ENCODE measurements at regions of chr6 and their contacts with region 1.

Region 1: DNA sequence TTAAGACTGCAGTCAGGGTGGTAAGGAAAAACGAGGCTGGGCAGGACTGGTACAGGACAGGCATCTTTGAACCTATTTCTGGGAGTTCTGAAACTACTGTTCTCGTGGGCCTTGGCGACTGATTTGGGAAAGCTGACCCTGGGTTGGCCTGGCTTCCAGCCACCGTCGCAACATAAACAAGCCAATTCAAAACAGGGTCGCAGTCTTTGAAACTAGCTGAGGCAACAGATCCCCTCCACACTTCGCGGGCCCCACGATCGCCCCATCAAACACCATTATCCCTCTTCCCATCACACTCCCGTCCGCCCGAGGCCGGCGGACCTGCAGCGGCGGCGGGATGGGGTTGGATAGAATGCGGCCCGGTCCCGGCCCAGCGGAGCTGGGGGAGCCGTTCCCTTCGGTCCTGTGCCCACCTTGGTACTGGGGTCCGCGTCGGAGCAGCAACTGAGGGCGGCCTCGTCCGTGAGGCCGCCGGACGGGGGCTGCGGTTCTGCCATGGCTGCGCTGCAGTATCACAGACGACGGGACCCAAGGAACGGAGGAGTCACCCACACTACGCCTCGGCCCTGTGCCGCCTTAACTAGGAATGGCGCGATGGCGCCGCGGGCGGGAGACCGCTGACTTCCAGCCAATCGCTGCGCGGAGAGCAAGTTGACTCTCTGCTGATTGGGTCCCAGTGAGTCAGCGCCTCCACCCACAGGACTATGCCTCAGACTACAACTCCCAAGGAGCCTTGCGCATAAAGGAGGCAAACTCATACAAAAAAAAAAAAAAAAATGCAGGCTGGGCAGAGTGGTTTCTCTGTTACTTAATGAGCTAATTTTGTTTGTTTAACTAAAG is at the start of gene GLO1:
- DNase-seq: peak; percentile 97
- ATAC-seq: peak; percentile 99
- H3K4me3 ChIP-seq: peak within 1 kb of the TSS; percentile 81 to 86
- H3K27ac ChIP-seq: peak within 1 kb of the TSS; percentile 70
- H3K4me1 ChIP-seq: peaks cover 0 to 11% of the 10 kb centered on the region in 2 experiments; a peak in 2 of 4 replicates
- H3K27me3 ChIP-seq: no peaks in the 10 kb centered on the region
- CTCF ChIP-seq: no peak
- POLR2A ChIP-seq: peak; percentile 91
- RAD21 ChIP-seq: no peak
- total RNA-seq, gene GLO1: 191 TPM

Region 2: DNA sequence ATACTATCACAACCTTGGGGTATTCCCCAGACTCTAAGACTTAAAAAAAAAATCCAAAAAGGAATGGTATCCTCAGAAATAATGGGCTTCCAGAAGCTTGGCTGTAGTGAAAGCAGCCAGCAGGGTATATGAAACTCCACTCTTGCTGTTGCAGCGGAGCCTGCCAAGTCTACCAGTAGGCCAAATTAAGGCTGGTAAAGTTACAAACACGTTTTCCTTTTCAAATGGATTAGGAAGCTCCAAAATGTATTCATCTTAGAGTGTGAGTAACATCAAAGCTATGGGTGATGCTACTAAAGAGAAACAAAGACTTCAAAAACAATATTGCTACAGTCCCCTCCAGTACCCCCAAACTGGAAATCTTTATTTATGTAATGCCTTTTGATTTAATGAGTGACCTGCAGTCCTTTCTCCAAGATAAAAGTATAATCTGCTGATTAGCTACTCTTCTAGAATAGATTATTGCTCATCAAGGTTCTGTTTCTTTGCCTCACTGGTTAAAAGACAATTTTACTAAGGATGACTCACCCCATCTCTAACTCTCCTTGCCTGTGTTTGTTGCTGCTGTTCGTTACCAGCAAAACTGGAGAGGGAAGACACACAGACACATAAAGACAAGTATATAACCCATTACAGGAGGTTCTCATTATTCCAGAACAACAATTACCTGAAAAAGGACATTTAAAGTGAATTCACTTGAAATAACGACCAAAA is 147.9 kb before region 1 on chr6:
- CTCF ChIA-PET with region 1: no interaction called
- POLR2A ChIA-PET with region 1: no interaction called
- RAD21 ChIA-PET with region 1: no interaction called
- intact Hi-C with region 1: no loop called
- DNase-seq: no peak
- ATAC-seq: no peak; the same call in 1 of the 2 replicates
- H3K4me3 ChIP-seq: no peak overlapping the region
- H3K27ac ChIP-seq: no peak overlapping the region
- H3K4me1 ChIP-seq: peaks cover 0 to 9% of the 10 kb centered on the region in 2 experiments; a peak in 2 of 4 replicates
- H3K27me3 ChIP-seq: no peaks in the 10 kb centered on the region
- CTCF ChIP-seq: no peak
- POLR2A ChIP-seq: no peak
- RAD21 ChIP-seq: no peak

Region 3: GRCh38 chr6:38688579-38689087 is 14.1 kb before region 1 on chr6:
- CTCF ChIA-PET with region 1: interaction called, 3 read pairs
- POLR2A ChIA-PET with region 1: interaction called, 13 read pairs
- RAD21 ChIA-PET with region 1: no interaction called
- intact Hi-C with region 1: no loop called
- DNase-seq: no peak
- ATAC-seq: no peak
- H3K4me3 ChIP-seq: no peak overlapping the region
- H3K27ac ChIP-seq: no peak overlapping the region
- H3K4me1 ChIP-seq: no peaks in the 10 kb centered on the region
- H3K27me3 ChIP-seq: no peaks in the 10 kb centered on the region
- CTCF ChIP-seq: no peak
- POLR2A ChIP-seq: no peak
- RAD21 ChIP-seq: no peak